Mammary epithelial cell (primary cell): ENCODE measurements at regions of chr7 and their contacts with region 1.

Region 1: DNA sequence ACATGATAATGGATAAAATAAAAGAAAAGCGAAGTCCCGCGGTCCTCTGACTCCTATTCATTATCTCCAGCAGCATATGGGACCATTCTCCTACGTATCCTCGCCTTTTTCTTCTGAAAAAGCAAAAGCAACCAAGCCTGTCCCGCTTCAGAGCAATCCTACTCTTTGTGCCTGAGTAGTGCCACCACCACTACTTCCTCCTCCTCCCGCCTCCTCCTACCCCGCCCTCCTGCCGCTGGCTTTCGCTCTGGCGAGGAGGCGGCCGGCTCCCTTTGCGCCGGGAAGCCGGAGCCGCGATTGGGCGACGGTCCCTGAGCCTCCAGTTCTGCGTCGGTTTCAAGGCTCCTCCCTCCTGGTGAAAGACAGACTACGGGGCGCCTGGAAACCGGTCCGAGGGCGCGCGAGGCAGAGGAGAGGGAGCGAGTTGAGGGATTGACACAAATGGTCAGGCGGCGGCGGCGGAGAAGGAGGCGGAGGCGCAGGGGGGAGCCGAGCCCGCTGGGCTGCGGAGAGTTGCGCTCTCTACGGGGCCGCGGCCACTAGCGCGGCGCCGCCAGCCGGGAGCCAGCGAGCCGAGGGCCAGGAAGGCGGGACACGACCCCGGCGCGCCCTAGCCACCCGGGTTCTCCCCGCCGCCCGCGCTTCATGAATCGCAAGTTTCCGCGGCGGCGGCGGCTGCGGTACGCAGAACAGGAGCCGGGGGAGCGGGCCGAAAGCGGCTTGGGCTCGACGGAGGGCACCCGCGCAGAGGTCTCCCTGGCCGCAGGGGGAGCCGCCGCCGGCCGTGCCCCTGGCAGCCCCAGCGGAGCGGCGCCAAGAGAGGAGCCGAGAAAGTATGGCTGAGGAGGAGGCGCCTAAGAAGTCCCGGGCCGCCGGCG is at the start of gene FZD1:
- DNase-seq: peak; percentile 99
- H3K4me3 ChIP-seq: peak within 1 kb of the TSS; percentile 63 to 79 (median 74)
- H3K27ac ChIP-seq: peak within 1 kb of the TSS; percentile 53
- H3K4me1 ChIP-seq: peaks cover 22% of the 10 kb centered on the region
- H3K27me3 ChIP-seq: no peaks in the 10 kb centered on the region
- CTCF ChIP-seq: no peak
- total RNA-seq, gene FZD1: 3.0 to 17.7 TPM

Region 2: DNA sequence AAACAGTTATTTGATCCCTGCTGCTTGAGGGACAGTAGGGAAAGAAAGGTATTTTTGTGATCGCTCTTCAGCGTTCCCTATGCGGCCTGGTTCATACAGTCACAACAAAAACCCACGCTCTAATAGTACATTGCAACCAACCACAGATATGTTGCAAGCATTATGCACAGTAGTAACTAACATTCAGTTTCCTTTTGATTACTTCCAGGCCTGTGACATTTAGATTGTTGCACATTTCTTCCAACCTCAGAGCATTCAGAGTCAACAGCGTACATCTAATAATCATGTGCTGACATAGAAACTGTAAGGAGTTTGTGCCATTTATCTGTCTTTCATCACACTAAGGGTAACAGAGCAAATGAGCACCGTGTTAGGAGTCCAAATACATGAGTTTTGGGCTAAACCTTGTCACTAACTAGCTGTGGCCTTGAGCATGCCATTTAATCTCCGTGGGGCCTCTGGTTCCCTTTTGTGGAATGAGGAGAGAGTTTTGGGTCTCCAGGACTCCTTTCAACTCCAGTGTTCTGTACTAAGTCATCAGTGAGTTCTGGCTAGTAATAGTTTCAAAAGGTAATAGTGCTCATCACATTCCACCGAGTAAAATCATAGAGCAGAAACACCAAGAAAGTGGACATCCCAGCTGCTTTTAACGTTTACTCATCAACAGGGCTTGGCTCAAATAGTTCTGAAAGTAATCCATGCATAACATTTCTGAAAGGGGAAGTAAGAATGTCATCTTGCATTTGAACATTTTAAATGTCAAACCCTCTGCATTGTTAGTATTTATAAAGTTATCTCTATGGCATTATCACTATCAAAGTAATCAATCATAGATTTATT is 99.1 kb before region 1 on chr7:
- CTCF ChIA-PET with region 1: no interaction called
- dilution Hi-C with region 1: no loop called
- in situ Hi-C with region 1: no loop called
- intact Hi-C with region 1: loop called (anchors 5 kb)
- DNase-seq: peak; percentile 79
- H3K4me3 ChIP-seq: no peak overlapping the region
- H3K27ac ChIP-seq: peak overlapping the region; percentile 40
- H3K4me1 ChIP-seq: peaks cover 18% of the 10 kb centered on the region
- H3K27me3 ChIP-seq: no peaks in the 10 kb centered on the region
- CTCF ChIP-seq: no peak

Region 3: DNA sequence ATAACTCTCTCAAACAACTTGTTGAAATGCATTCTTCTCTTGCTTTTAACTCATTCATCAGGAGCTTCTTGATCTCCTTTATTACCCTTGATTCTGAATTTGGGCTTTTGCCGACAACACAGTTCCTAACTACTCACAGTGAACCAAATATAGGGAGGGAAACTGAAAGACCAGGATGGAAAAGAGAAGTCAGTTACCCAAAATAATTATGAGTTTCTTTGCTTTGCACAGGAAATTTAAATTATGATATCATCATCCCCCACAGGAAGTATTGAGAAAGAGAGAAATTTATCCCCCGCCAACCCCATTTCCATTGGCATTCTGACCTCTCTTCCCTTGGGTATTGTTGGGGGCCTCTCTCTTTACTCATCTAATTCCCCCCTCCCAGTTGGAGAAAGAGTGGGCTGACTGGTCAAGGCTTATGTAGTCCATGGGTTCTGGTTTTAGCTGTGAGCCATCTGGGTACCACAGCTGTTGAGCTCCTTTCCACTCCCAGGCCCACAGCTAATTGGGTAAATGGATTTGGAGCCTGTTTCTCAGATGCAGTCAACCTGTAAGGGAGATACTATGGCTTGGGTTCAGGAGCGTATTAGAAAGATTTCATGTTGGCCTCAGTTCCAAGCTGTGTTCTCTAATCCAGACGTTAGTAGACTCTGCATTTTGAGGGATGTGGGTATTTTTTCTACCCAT is 109.0 kb after region 1 on chr7:
- CTCF ChIA-PET with region 1: no interaction called
- dilution Hi-C with region 1: no loop called
- in situ Hi-C with region 1: no loop called
- intact Hi-C with region 1: no loop called
- DNase-seq: no peak
- H3K4me3 ChIP-seq: no peak overlapping the region
- H3K27ac ChIP-seq: no peak overlapping the region
- H3K4me1 ChIP-seq: no peaks in the 10 kb centered on the region
- H3K27me3 ChIP-seq: peaks cover 5% of the 10 kb centered on the region
- CTCF ChIP-seq: no peak

Region 4: DNA sequence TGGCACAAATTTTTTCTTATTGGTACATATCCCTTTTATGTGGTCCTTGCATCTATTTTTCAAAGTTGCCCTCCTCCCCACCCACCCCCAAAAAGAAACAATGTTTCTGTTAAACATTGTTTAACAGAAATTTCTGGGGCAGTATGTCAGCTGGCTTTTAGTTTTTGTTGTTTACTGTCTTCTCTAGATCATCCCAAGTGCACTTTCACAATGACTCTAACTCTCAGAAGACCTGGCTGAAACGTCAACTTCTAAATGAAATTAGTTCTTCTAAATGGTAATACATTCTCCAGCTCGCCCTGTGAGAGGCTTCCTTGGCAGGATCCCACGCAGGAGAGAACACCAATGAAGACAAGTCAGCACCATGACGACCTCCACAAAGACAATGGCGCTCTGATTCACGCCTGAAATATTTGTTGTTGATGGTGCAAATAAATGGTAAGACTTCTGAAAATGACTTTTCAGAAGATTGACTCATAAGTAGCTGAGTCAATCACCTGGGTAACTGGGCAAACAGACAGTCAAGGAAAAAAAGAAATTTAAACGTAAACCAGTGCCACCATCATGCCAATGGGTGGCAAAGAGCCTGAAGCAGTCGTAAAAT is 293.6 kb after region 1 on chr7:
- CTCF ChIA-PET with region 1: no interaction called
- dilution Hi-C with region 1: no loop called
- in situ Hi-C with region 1: no loop called
- intact Hi-C with region 1: loop called (anchors 5 kb)
- DNase-seq: peak; percentile 98
- H3K4me3 ChIP-seq: peak overlapping the region in 2 of 3 experiments; percentile 11 to 21
- H3K27ac ChIP-seq: peak overlapping the region; percentile 97
- H3K4me1 ChIP-seq: peaks cover 23% of the 10 kb centered on the region
- H3K27me3 ChIP-seq: no peaks in the 10 kb centered on the region
- CTCF ChIP-seq: no peak

Region 5: GRCh38 chr7:91720260-91720937 is 456.1 kb after region 1 on chr7:
- CTCF ChIA-PET with region 1: no interaction called
- dilution Hi-C with region 1: no loop called
- in situ Hi-C with region 1: no loop called
- intact Hi-C with region 1: no loop called
- DNase-seq: peak; percentile 84
- H3K4me3 ChIP-seq: no peak overlapping the region
- H3K27ac ChIP-seq: peak overlapping the region; percentile 50
- H3K4me1 ChIP-seq: peaks cover 18% of the 10 kb centered on the region
- H3K27me3 ChIP-seq: no peaks in the 10 kb centered on the region
- CTCF ChIP-seq: no peak